Adrenal gland (tissue), 19 donors: ENCODE measurements at regions of chr2 and their contacts with region 1.

Region 1: DNA sequence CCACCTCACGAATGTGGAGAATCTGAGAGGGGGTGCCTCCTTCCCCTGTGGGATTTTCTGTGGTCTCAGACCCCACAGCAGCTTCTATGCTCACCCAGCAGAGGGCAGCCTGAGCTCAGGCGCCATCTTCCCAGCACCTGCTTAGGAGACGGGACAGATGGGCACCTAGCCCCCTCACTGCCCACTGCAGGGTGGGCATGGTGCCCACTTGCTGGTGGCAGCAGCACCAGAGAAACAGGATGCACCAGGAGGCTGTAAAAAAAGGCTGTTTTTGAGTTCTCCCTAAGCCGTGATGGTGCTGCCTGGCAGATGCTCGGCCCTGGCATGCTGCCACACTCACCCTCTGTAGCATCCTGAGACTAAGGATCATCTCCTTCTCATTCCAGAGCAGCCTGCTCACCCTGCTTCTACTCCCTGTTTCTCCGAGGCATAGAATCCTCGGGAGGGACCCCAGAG is 19.1 kb upstream of the SLC20A1 start:
- DNase-seq: peak; percentile 47 to 70 (median 58)
- H3K4me3 ChIP-seq: no peak overlapping the region
- H3K27ac ChIP-seq: peak overlapping the region in 3 of 5 donors; percentile 18 to 79 (median 68)
- H3K4me1 ChIP-seq: peaks cover 0 to 17% of the 10 kb centered on the region in 2 donors
- H3K27me3 ChIP-seq: no peaks in the 10 kb centered on the region
- CTCF ChIP-seq: peak; percentile 66 to 89 (median 82)
- POLR2A ChIP-seq: no peak

Region 2: GRCh38 chr2:112685271-112685884 is 58.7 kb after region 1 on chr2:
- intact Hi-C with region 1: loop called (anchors 5 to 10 kb)
- DNase-seq: peak in 1 of 7 donors; percentile 4
- H3K4me3 ChIP-seq: no peak overlapping the region
- H3K27ac ChIP-seq: no peak overlapping the region
- H3K4me1 ChIP-seq: no peaks in the 10 kb centered on the region
- H3K27me3 ChIP-seq: no peaks in the 10 kb centered on the region
- CTCF ChIP-seq: peak in 1 of 6 experiments; percentile 6
- POLR2A ChIP-seq: no peak

Region 3: DNA sequence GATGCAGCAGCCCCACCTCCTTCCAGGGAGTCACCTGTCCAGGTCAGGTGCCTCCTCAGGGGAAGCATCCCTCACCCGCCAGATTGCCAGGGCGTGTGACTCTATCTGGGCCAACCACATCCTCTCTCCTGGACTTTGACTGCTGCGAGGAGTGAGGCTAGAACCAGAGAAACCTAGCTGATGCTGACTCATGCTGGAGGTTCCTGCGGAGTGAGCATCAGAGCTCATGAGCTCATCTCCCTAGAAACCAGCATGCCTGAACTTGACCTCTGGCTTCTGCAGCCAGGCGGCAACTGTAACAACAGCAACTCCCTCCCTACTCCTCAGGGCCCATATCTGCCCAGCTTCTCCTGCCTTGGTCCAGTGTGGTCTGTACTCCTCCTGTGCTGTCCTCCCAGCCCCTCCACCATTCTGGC is 65.9 kb after region 1 on chr2:
- intact Hi-C with region 1: loop called (anchors 5 to 10 kb)
- DNase-seq: peak; percentile 27 to 72 (median 61)
- H3K4me3 ChIP-seq: no peak overlapping the region
- H3K27ac ChIP-seq: peak overlapping the region in 1 of 5 donors; percentile 29
- H3K4me1 ChIP-seq: peaks cover 0 to 20% of the 10 kb centered on the region in 2 donors
- H3K27me3 ChIP-seq: no peaks in the 10 kb centered on the region
- CTCF ChIP-seq: no peak
- POLR2A ChIP-seq: no peak